Heart right ventricle (tissue), 16 donors: ENCODE measurements at regions of chr6 and their contacts with region 1.

Region 1: DNA sequence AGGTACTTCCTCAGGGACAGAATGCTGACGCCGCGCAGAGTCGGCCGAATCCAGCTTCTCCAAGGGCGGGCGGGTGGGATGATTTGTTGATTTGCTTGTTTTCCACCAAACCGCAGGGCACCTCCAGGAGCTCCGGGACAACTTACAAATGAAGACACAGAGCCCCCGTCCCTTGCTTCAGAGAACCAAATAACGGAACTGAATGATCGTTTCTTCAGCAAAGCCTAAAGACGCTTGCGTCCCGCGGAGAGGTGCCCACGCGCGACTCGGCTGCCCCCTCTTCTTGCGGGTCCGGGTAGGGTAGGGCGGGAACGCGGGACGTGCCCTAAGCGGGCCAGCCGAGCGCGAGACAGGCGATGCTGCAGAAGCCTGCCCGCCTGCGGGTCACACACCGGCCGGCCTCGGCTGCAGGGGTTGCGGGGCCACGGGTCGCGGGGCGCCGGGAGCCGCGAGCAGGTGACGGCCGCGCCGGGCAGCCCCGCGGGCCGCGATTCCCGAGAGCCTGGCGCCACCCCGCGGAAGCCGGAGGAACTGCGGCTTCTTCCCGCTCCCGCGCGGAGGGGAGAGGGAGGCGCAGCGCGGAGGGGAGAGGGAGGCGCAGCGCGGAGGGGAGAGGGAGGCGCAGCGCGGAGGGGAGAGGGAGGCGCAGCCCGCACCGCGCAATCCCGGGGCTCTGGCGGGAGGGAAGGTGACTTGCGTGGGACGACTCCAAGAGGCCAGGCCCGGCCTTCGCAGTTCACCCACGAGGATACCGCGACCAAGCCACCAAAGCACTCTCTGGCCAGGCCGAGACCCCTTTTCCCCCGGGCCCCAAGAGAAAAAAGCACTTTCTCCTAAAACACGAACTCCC is 7.7 kb upstream of the FOXF2 start:
- DNase-seq: peak; percentile 29 to 55
- ATAC-seq: peak; percentile 77 to 88 (median 85)
- H3K4me3 ChIP-seq: peak overlapping the region in 9 of 10 donors; percentile 16 to 39 (median 31)
- H3K27ac ChIP-seq: no peak overlapping the region
- H3K4me1 ChIP-seq: peaks cover 8 to 59% (median 40%) of the 10 kb centered on the region in 9 donors
- H3K27me3 ChIP-seq: peaks cover 67 to 100% (median 100%) of the 10 kb centered on the region in 7 donors
- CTCF ChIP-seq: peak; percentile 68 to 93 (median 83)

Region 2: DNA sequence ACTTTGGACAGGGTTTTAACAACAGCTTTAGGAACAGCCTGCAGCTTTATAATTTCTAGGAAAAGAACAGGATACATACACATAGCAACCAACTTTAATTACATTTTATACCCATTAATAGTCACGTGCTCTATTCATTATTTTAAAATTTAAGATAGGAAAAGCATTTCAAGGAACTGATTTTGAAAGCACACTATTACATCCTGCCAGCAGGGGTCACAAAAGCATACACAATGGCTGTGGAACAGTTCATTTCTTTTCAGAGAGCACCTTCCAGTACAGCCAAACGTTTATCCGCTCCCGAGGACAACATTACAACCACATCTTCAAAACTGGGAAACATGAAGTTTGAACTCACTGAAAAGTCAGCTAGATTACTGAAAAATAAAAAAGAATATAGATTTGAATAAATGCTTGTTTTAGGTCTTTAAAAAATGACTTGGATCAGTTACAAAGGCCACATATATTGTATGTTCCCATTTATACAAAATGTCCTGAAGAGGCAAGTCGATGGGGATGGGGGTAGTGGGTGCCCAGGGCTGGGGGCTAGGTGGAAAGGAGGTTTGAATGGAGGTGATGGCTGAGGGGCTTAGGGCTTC is 584.1 kb before region 1 on chr6:
- intact Hi-C with region 1: loop called (anchors 1 to 5 kb)
- DNase-seq: peak in 1 of 2 donors; percentile 55
- ATAC-seq: peak in 3 of 8 donors; percentile 41 to 64 (median 53)
- H3K4me3 ChIP-seq: no peak overlapping the region
- H3K27ac ChIP-seq: no peak overlapping the region
- H3K4me1 ChIP-seq: no peaks in the 10 kb centered on the region
- H3K27me3 ChIP-seq: peaks cover 0 to 92% (median 83%) of the 10 kb centered on the region in 7 donors
- CTCF ChIP-seq: peak; percentile 60 to 89 (median 80)

Region 3: GRCh38 chr6:912871-913835 is 468.6 kb before region 1 on chr6:
- intact Hi-C with region 1: loop called in 8 of 10 experiments (anchors 5 to 10 kb)
- DNase-seq: peak in 1 of 2 donors; percentile 14
- ATAC-seq: peak in 1 of 8 donors; percentile 42
- H3K4me3 ChIP-seq: no peak overlapping the region
- H3K27ac ChIP-seq: no peak overlapping the region
- H3K4me1 ChIP-seq: no peaks in the 10 kb centered on the region
- H3K27me3 ChIP-seq: peaks cover 0 to 41% (median 28%) of the 10 kb centered on the region in 7 donors
- CTCF ChIP-seq: peak in 7 of 9 donors; percentile 31 to 55 (median 39)

Region 4: DNA sequence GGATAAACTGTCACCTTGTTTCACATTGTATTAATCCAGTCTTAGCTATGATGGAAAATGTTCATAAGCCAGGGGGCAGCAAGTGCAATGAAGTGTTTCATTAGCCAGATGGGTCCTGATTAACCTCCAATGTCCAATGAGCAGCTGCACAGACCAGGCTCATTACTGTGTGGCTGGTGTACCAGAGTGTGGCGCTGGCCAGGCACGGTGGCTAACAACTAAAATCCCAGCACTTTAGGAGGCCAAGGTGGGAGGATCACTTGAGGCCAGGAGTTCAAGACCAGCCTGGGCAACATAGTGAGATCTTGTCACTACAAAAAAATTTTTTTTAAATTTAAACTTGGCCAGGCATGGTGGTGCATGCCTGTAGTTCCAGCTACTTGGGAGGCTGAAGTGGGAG is 271.5 kb before region 1 on chr6:
- intact Hi-C with region 1: loop called in 1 of 10 experiments (anchors 10 kb)
- DNase-seq: no peak
- ATAC-seq: no peak
- H3K4me3 ChIP-seq: no peak overlapping the region
- H3K27ac ChIP-seq: no peak overlapping the region
- H3K4me1 ChIP-seq: no peaks in the 10 kb centered on the region
- H3K27me3 ChIP-seq: peaks cover 0 to 20% (median 0%) of the 10 kb centered on the region in 7 donors
- CTCF ChIP-seq: peak in 2 of 9 donors; percentile 5 to 16